Transverse colon (tissue), 4 donors: ENCODE measurements at regions of chr13 and their contacts with region 1.

Region 1: DNA sequence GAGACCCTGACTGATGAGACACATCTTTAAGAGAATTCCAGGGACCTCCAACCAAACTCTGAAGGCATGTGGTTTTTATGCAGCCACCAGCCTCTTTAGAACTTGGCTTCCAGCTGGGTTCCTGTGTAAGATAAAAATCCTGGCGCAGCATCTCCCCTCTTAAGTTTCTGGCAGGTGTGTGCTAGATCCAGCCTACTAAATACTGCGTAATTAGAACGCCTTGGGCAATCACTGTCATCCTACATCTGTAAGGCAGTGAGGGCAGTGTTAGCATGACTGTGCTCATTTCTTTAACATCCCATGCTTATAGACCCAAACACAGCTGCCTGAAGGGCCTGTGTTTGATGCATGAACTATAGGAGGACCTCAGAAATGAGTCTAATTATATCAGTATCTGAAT is 173.5 kb upstream of the OBI1 start:
- DNase-seq: no peak
- H3K4me3 ChIP-seq: no peak overlapping the region
- H3K27ac ChIP-seq: no peak overlapping the region
- H3K4me1 ChIP-seq: no peaks in the 10 kb centered on the region
- H3K27me3 ChIP-seq: no peaks in the 10 kb centered on the region
- CTCF ChIP-seq: no peak
- EP300 ChIP-seq: no peak
- POLR2A ChIP-seq: no peak

Region 2: GRCh38 chr13:78777976-78778375 is 54.5 kb before region 1 on chr13:
- in situ Hi-C with region 1: loop called in 1 of 4 experiments (anchors 10 kb)
- intact Hi-C with region 1: no loop called
- DNase-seq: no peak
- H3K4me3 ChIP-seq: no peak overlapping the region
- H3K27ac ChIP-seq: no peak overlapping the region
- H3K4me1 ChIP-seq: no peaks in the 10 kb centered on the region
- H3K27me3 ChIP-seq: no peaks in the 10 kb centered on the region
- CTCF ChIP-seq: no peak
- EP300 ChIP-seq: no peak
- POLR2A ChIP-seq: no peak

Region 3: DNA sequence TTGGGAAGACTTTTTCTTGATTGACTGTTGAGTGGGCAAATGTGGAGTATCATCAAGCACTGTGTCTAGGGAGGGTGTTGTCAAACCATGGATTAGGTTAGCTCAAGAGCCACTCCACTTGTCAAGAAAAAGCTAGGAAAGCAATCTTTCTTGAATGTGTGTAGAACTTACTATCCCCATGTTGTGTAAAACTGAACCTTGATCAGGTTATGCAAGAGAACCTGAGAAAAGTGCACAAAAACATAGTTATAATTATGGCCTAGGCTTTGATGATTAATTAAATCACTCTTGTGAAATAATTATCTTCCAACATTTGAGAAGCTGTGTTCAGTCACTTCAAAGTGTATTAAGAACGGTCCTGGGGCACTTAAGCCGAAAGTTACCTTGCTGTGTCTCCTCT is 64.7 kb after region 1 on chr13:
- in situ Hi-C with region 1: no loop called
- intact Hi-C with region 1: no loop called
- DNase-seq: no peak
- H3K4me3 ChIP-seq: no peak overlapping the region
- H3K27ac ChIP-seq: no peak overlapping the region
- H3K4me1 ChIP-seq: no peaks in the 10 kb centered on the region
- H3K27me3 ChIP-seq: no peaks in the 10 kb centered on the region
- CTCF ChIP-seq: no peak
- EP300 ChIP-seq: no peak
- POLR2A ChIP-seq: no peak